Activated B cell treated with CpG ODN at 0.5 μM for 24 hours (primary cell): ENCODE measurements at regions of chr21 and their contacts with region 1.

Region 1: GRCh38 chr21:42062236-42063022 is 8.7 kb upstream of the UMODL1 start:
- DNase-seq: peak; percentile 53
- ATAC-seq: peak; percentile 51
- H3K4me3 Mint-ChIP-seq: peak overlapping the region; percentile 77
- H3K27ac Mint-ChIP-seq: peak overlapping the region; percentile 91
- H3K4me1 Mint-ChIP-seq: peaks cover 85% of the 10 kb centered on the region
- H3K27me3 Mint-ChIP-seq: no peaks in the 10 kb centered on the region
- CTCF ChIP-seq: no peak

Region 2: GRCh38 chr21:41361786-41362604 is 700.4 kb before region 1 on chr21 and contains the start of gene MX2:
- CTCF ChIA-PET with region 1: no interaction called
- POLR2A ChIA-PET with region 1: no interaction called
- intact Hi-C with region 1: loop called (anchors 10 kb)
- DNase-seq: peak; percentile 51
- ATAC-seq: peak; percentile 78
- H3K4me3 Mint-ChIP-seq: peak within 1 kb of the TSS; percentile 84
- H3K27ac Mint-ChIP-seq: peak within 1 kb of the TSS; percentile 97
- H3K4me1 Mint-ChIP-seq: peaks cover 61% of the 10 kb centered on the region
- H3K27me3 Mint-ChIP-seq: no peaks in the 10 kb centered on the region
- CTCF ChIP-seq: no peak
- total RNA-seq, gene MX2: 32.6 and 34.4 TPM in 2 replicates

Region 3: GRCh38 chr21:41879190-41879998 is 183.0 kb before region 1 on chr21 and contains the start of gene PRDM15:
- CTCF ChIA-PET with region 1: interaction called, 6 read pairs
- POLR2A ChIA-PET with region 1: no interaction called
- intact Hi-C with region 1: loop called (anchors 5 kb)
- DNase-seq: peak; percentile 83
- ATAC-seq: peak; percentile 63
- H3K4me3 Mint-ChIP-seq: peak within 1 kb of the TSS; percentile 90
- H3K27ac Mint-ChIP-seq: peak within 1 kb of the TSS; percentile 93
- H3K4me1 Mint-ChIP-seq: peaks cover 39% of the 10 kb centered on the region
- H3K27me3 Mint-ChIP-seq: no peaks in the 10 kb centered on the region
- CTCF ChIP-seq: no peak
- total RNA-seq, gene PRDM15: 12.8 and 13.6 TPM in 2 replicates

Region 4: DNA sequence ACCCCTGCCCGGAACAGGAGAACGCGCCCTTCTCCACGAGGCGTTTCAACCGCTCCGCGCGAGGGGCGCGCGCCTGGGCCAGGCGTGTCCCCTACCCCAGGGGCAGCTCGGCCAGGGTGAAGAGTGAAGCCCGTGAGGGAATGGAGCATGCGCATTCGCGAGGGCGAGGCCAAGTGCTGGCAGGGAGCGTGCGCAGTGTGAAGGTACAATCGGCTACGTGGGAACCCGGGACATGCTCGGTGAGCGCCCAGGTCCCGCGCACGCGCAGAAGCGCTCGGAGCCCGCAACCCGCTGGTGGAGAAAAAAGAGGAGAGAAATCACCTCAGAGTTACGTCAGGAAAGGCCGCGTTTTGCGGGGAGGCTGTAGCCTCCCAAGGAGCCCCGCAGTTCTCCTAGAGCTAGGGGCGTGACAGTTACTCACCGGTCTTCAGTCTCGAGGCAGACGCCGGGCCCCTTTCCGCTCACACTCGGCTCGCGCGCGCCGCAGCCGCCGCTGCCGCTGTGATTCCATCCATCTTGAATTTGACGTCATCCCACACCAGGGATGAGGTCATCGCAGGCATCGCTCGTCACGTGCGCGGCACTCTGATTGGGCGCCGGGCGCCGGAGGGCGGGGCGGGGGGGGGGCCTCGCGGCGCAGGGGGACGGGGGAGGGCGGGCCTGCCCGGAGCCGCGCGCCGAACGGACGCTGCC is 52.5 kb before region 1 on chr21 and contains the start of gene ZBTB21:
- CTCF ChIA-PET with region 1: no interaction called
- POLR2A ChIA-PET with region 1: interaction called, 21 read pairs
- intact Hi-C with region 1: loop called (anchors 1 kb)
- DNase-seq: peak; percentile 97
- ATAC-seq: peak; percentile 79
- H3K4me3 Mint-ChIP-seq: peak within 1 kb of the TSS; percentile 98
- H3K27ac Mint-ChIP-seq: peak within 1 kb of the TSS; percentile 100
- H3K4me1 Mint-ChIP-seq: peaks cover 36% of the 10 kb centered on the region
- H3K27me3 Mint-ChIP-seq: no peaks in the 10 kb centered on the region
- CTCF ChIP-seq: no peak
- total RNA-seq, gene ZBTB21: 24.2 and 25.4 TPM in 2 replicates

Region 5: DNA sequence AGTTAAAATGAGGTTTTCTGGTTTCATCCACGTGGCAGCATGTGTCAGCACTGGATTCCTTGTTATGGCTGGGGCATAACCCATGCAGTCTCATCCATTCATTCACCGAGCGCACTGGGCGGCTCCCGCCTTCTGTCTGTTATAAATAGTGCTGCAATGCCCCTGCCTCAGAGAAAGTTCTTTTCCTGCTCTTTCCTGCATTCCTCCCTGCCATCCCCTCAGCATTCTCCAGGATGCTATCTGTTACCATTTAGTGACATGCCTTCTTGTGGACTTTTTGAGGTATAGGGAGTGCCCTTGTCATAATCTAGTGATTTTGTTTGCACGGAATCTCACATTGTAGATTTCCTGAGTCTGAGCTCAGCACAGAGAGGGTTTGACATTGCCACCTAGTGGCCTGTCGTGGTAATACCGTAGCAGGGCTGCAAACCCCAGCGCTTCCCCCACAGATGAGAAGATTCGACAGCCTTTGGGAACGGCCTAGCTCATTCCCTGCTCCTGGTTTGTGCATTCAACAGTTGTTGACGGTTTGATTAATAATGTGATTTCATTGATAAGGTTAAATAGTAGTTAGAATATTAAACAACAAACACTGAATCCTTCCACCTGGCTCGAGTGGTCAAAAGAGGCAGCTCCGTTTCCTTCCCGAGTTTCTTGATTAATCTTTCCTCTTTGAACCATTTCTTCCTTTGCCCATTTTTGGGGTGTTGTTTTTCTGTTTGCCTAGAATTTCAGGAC is 55.0 kb after region 1 on chr21:
- CTCF ChIA-PET with region 1: no interaction called
- POLR2A ChIA-PET with region 1: interaction called, 4 read pairs
- intact Hi-C with region 1: loop called (anchors 1 kb)
- DNase-seq: peak; percentile 61
- ATAC-seq: peak; percentile 85
- H3K4me3 Mint-ChIP-seq: peak overlapping the region; percentile 37
- H3K27ac Mint-ChIP-seq: no peak overlapping the region
- H3K4me1 Mint-ChIP-seq: peaks cover 48% of the 10 kb centered on the region
- H3K27me3 Mint-ChIP-seq: peaks cover 16% of the 10 kb centered on the region
- CTCF ChIP-seq: peak; percentile 70

Region 6: DNA sequence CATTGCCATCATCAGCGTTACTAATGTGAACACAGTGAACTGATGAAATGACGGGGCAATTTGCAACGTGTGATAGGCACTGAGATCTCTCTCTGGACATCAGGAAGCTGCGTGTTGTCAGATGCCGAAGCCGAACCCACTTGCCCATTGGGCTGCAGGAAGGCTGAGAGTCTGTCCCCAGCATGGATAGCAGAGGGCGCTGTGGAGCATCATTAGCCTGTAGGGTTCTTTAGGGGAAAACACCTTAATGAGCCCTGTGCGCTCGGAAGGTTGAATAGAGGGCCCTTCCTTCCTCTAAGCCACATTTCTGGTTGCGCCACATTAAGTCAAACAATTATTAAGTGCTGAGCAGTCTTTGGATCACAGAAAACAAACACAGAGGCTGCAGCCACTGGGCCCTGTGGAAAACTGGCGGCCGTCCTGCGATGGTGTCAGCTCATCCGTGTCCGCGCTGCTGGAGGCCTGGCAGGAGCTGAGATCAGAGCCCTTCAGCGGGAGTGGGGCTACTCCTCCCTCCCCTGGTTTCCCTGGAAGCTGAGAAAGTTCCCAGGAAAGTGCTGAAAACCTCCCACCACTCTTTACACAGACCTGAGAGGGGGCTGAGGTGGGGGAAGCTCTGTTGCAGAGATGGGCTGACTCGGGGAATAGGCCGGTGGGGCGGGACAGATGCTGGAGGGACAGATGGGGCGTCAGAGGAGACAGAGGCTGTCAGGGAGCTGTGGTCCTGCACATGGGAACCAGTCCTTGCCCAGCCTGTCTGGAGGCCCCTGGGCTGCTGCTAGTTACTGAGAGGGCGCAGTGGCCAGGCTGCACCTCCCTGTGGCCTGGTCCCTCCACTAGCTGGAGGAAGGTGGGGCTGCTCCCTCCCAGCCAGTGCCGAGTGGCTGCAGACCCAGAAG is 275.6 kb after region 1 on chr21:
- CTCF ChIA-PET with region 1: no interaction called
- POLR2A ChIA-PET with region 1: no interaction called
- intact Hi-C with region 1: no loop called
- DNase-seq: peak; percentile 61
- ATAC-seq: peak; percentile 100
- H3K4me3 Mint-ChIP-seq: no peak overlapping the region
- H3K27ac Mint-ChIP-seq: no peak overlapping the region
- H3K4me1 Mint-ChIP-seq: peaks cover 10% of the 10 kb centered on the region
- H3K27me3 Mint-ChIP-seq: peaks cover 13% of the 10 kb centered on the region
- CTCF ChIP-seq: no peak

Region 7: GRCh38 chr21:42524349-42525151 is 462.1 kb after region 1 on chr21:
- CTCF ChIA-PET with region 1: no interaction called
- POLR2A ChIA-PET with region 1: no interaction called
- intact Hi-C with region 1: loop called (anchors 10 kb)
- DNase-seq: peak; percentile 90
- ATAC-seq: peak; percentile 83
- H3K4me3 Mint-ChIP-seq: peak overlapping the region; percentile 78
- H3K27ac Mint-ChIP-seq: peak overlapping the region; percentile 95
- H3K4me1 Mint-ChIP-seq: peaks cover 87% of the 10 kb centered on the region
- H3K27me3 Mint-ChIP-seq: no peaks in the 10 kb centered on the region
- CTCF ChIP-seq: no peak